Activated T-helper 1 cell treated with anti-CD3 and anti-CD28 coated beads, Interleukin-12 subunit alpha, Interleukin-12 subunit beta, Interleukin-2, Interleukin-4 antibody, amounts not matched to agents 30 ng/mL and 10 ng/mL and 1 ng/mL, durations not matched to agents 14 hours and 24 hours and 36 hours (primary cell): ENCODE measurements at regions of chr1 and their contacts with region 1.

Region 1: DNA sequence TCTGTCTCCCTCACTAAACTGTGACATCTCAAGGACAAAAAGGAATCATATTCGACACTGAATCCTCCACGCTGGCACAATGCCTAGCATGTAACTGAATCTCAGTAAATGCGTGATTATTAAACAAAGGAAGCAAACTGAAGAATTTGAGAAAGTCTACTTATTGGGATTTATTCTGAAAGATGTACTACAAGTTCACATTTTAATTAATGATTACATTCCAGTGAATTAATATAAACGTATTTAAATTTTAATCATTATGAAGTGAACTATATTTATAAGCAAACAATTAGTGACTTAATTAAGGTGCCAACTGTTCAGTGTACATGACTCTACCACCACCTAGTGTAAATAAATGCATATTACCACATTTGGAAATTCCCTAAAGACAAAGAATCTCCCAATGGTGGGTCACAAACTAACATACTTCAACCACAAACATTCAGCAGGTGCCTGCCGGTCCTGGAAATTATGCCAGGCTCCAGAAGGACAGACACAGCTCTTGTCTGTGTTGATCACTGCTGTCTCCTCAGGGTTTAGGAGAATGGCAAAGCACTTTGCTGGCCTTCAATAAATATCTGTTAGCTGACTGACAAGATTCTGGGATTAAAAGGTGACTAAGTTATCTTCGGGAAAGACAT is 56.3 kb downstream of the SMYD3 start:
- DNase-seq: no peak
- H3K4me3 Mint-ChIP-seq: no peak overlapping the region
- H3K27ac Mint-ChIP-seq: no peak overlapping the region
- H3K4me1 Mint-ChIP-seq: no peaks in the 10 kb centered on the region
- H3K27me3 Mint-ChIP-seq: no peaks in the 10 kb centered on the region

Region 2: GRCh38 chr1:246213036-246213435 is 237.7 kb before region 1 on chr1:
- intact Hi-C with region 1: loop called (anchors 1 kb)
- DNase-seq: no peak
- H3K4me3 Mint-ChIP-seq: no peak overlapping the region
- H3K27ac Mint-ChIP-seq: no peak overlapping the region
- H3K4me1 Mint-ChIP-seq: no peaks in the 10 kb centered on the region
- H3K27me3 Mint-ChIP-seq: no peaks in the 10 kb centered on the region